ENCODE measurements at regions of chr20 and their contacts with region 1.

Region 1: GRCh38 chr20:32516583-32517517 is 68.3 kb downstream of the NOL4L start:
- DNase-seq: peak; percentile 89
- H3K4me3 ChIP-seq: no peak overlapping the region
- H3K27ac ChIP-seq: peak overlapping the region in 1 of 2 experiments; percentile 100; a peak in 3 of 4 replicates
- H3K4me1 ChIP-seq: peaks cover 0 to 62% of the 10 kb centered on the region in 2 experiments; a peak in 3 of 4 replicates
- H3K27me3 ChIP-seq: no peaks in the 10 kb centered on the region
- CTCF ChIP-seq: no peak
- EP300 ChIP-seq: peak in 1 of 2 experiments; percentile 91; a peak in 2 of 4 replicates
- RAD21 ChIP-seq: peak; percentile 33; the same call in 1 of the 2 replicates

Region 2: GRCh38 chr20:32445539-32446273 is 71.1 kb before region 1 on chr20:
- CTCF ChIA-PET with region 1: interaction called, 4 read pairs
- POLR2A ChIA-PET with region 1: interaction called, 11 read pairs
- DNase-seq: peak; percentile 87
- H3K4me3 ChIP-seq: no peak overlapping the region; a peak in 1 of 4 replicates
- H3K27ac ChIP-seq: peak overlapping the region in 1 of 2 experiments; percentile 98; a peak in 2 of 4 replicates
- H3K4me1 ChIP-seq: peaks cover 0 to 69% of the 10 kb centered on the region in 2 experiments; a peak in 3 of 4 replicates
- H3K27me3 ChIP-seq: no peaks in the 10 kb centered on the region
- CTCF ChIP-seq: no peak
- EP300 ChIP-seq: peak in 1 of 2 experiments; percentile 67; a peak in 1 of 4 replicates
- RAD21 ChIP-seq: peak; percentile 46

Region 3: DNA sequence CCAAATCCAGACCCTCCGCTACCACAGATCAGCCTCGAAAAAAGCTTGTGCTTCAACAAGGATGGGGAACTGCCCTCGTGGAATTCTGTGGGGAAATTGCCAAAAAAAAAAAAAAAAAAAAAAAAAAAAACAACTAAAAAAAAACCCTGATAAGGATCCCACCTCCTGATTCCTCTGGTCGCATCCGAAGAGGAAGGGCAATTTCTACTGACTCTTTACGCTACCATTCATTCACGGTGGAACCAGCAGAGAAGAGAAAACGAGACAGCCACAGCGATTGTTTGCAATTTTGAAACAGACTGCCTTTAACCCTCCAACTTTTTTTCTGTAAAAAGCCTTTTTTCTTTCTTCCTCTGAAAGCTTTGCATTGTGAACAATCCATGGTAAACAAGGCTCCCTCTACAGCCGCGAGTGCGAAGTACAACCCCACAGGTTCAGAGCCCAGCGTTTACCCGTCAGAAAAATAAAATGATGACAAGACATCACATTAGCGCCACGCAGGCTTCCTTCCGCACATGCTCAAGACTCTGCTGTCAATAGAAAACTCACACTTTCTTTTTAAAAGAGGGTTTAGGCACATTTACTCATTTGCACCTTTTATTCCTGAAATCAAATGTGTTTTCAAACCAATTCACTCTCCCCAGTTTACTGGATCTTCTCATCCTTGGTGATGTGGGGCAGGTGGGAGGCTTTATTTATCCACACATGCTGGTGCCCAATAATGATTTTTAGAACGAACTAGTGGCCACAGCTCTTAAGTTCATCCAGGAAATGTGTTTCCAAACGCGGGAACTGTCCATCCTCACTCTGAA is 31.7 kb before region 1 on chr20:
- CTCF ChIA-PET with region 1: interaction called, 28 read pairs
- POLR2A ChIA-PET with region 1: interaction called, 6 read pairs
- DNase-seq: peak; percentile 61
- H3K4me3 ChIP-seq: peak overlapping the region; percentile 53 to 61
- H3K27ac ChIP-seq: peak overlapping the region; percentile 87 to 100
- H3K4me1 ChIP-seq: peaks cover 0 to 33% of the 10 kb centered on the region in 2 experiments; a peak in 2 of 4 replicates
- H3K27me3 ChIP-seq: no peaks in the 10 kb centered on the region
- CTCF ChIP-seq: peak; percentile 79
- EP300 ChIP-seq: no peak
- RAD21 ChIP-seq: peak; percentile 72

Region 4: GRCh38 chr20:32549842-32550241 is 33.0 kb after region 1 on chr20:
- CTCF ChIA-PET with region 1: no interaction called
- POLR2A ChIA-PET with region 1: no interaction called
- DNase-seq: no peak
- H3K4me3 ChIP-seq: no peak overlapping the region
- H3K27ac ChIP-seq: no peak overlapping the region
- H3K4me1 ChIP-seq: no peaks in the 10 kb centered on the region; a peak in 1 of 4 replicates
- H3K27me3 ChIP-seq: no peaks in the 10 kb centered on the region
- CTCF ChIP-seq: no peak
- EP300 ChIP-seq: no peak
- RAD21 ChIP-seq: no peak

Region 5: DNA sequence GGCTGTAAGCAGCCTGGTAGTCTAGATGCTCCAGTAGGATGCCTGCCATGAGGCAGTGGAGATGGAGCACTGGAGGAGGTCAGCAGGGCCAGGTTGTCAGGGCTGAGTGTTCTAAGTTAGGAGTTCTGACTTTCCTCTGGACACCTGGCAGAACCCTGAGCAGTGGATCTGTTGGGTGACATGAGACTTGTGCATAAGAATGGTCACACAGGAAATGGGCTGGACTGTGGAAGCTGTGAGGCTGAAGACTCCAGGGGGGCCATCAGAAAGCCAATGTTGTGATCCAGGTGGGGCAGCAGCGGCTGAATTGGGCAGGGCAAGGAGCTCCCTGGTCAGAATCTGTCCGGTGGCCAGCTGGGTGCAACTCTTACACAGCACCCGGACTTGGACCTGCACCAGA is 180.8 kb after region 1 on chr20:
- CTCF ChIA-PET with region 1: no interaction called
- POLR2A ChIA-PET with region 1: no interaction called
- DNase-seq: no peak
- H3K4me3 ChIP-seq: no peak overlapping the region
- H3K27ac ChIP-seq: no peak overlapping the region
- H3K4me1 ChIP-seq: no peaks in the 10 kb centered on the region
- H3K27me3 ChIP-seq: no peaks in the 10 kb centered on the region
- CTCF ChIP-seq: no peak
- EP300 ChIP-seq: no peak
- RAD21 ChIP-seq: no peak